T-cell (primary cell): ENCODE measurements at regions of chr3 and their contacts with region 1.

Region 1: DNA sequence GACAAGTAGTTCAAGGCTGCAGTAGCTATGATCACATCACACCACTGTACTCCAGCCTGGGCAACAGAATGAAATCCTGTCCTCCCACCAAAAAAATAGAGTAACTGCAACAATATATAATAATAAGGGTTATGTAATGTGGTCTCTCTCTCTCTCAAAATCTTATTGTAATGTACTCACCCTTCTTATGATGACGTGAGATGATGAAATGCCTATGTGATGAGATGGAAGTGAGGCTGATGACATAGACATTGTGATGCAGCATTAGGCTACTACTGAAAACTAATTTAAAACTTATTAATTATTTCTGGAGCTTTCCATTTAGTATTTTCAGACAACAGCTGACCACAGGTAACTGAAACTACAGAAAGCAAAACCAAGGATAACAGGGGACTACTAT is 27.4 kb downstream of the TASOR start:
- DNase-seq: no peak
- ATAC-seq: no peak
- H3K4me3 ChIP-seq: no peak overlapping the region
- H3K4me3 Mint-ChIP-seq: no peak overlapping the region
- H3K27ac ChIP-seq: no peak overlapping the region
- H3K27ac Mint-ChIP-seq: peak overlapping the region in 1 of 2 donors; percentile 19
- H3K4me1 ChIP-seq: peaks cover 0 to 3% of the 10 kb centered on the region in 2 experiments
- H3K4me1 Mint-ChIP-seq: peaks cover 39 to 54% (median 47%) of the 10 kb centered on the region in 3 donors
- H3K27me3 ChIP-seq: no peaks in the 10 kb centered on the region
- H3K27me3 Mint-ChIP-seq: no peaks in the 10 kb centered on the region

Region 2: DNA sequence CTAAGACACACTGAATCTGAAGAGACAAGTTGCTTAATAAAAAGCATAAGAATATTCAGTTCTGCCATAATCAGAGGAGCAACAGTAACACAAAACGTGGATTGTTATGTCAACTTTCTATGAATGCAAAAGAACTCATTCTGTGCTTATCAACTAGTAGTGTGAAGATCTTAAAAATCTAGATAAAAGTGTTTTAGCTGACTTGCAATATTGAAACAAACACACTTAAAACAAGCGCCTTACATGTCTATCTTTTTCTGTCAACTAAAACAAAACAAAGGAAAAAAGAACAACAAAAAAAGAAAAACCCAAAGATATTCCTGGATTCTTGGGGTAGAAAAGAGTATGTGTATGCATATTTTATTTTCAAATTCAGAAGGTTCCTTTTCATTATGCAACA is 10.3 kb before region 1 on chr3:
- CTCF ChIA-PET with region 1: interaction called in 1 of 2 experiments, 6 read pairs
- POLR2A ChIA-PET with region 1: interaction called in 1 of 2 experiments, 13 read pairs
- DNase-seq: no peak
- ATAC-seq: no peak
- H3K4me3 ChIP-seq: no peak overlapping the region
- H3K4me3 Mint-ChIP-seq: no peak overlapping the region
- H3K27ac ChIP-seq: no peak overlapping the region
- H3K27ac Mint-ChIP-seq: peak overlapping the region in 1 of 2 donors; percentile 11
- H3K4me1 ChIP-seq: peaks cover 0 to 3% of the 10 kb centered on the region in 2 experiments
- H3K4me1 Mint-ChIP-seq: peaks cover 20 to 45% (median 31%) of the 10 kb centered on the region in 3 donors
- H3K27me3 ChIP-seq: no peaks in the 10 kb centered on the region
- H3K27me3 Mint-ChIP-seq: no peaks in the 10 kb centered on the region

Region 3: GRCh38 chr3:56747150-56747549 is 91.4 kb after region 1 on chr3:
- CTCF ChIA-PET with region 1: no interaction called
- POLR2A ChIA-PET with region 1: interaction called in 1 of 2 experiments, 10 read pairs
- DNase-seq: no peak
- ATAC-seq: no peak
- H3K4me3 ChIP-seq: no peak overlapping the region
- H3K4me3 Mint-ChIP-seq: no peak overlapping the region
- H3K27ac ChIP-seq: peak overlapping the region; percentile 8
- H3K27ac Mint-ChIP-seq: peak overlapping the region; percentile 52 to 55
- H3K4me1 ChIP-seq: peaks cover 3 to 19% of the 10 kb centered on the region in 2 experiments
- H3K4me1 Mint-ChIP-seq: peaks cover 44 to 54% (median 52%) of the 10 kb centered on the region in 3 donors
- H3K27me3 ChIP-seq: no peaks in the 10 kb centered on the region
- H3K27me3 Mint-ChIP-seq: no peaks in the 10 kb centered on the region